CD14-positive monocyte (primary cell): ENCODE measurements at regions of chr9 and their contacts with region 1.

Region 1: DNA sequence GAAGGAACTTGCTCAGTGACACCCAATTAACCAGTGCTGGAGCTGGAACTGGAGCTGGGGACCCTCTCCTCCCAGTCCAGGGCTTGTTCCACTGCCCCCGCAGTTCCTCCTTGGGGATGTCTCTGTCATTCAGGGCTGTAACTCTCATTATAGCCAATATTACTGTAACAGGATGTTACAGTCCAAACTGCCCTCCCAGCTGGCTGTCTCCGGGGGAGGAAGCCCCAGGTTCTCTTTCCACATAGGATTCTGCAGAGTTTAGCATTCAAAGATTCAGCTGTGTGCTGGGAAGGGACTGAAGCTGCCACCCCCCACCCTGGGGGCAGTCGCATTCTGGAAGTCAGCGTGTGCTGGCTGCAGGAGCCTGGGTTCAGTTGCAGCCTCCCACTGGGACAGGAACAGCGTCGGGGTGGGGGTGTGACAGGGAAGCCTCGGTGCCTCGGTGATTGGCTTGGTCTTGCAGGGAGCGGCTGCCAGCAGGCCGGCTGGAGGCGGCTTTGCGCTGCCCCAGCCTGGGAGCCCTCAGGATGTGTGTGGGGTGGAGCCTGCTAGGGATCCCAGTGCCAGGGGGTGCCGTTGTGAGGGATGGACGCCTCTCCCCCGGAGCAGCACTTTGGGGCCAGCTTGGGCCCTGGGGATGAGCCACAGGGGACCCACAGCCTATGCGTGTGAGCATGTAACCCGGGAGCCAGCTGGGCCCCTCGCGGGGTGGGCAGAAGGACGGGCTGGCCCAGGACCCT is 101.1 kb downstream of the RGS3 start:
- DNase-seq: no peak
- H3K4me3 ChIP-seq: peak overlapping the region; percentile 15 to 70 (median 39)
- H3K4me3 Mint-ChIP-seq: peak overlapping the region; percentile 77 to 96
- H3K27ac ChIP-seq: no peak overlapping the region
- H3K27ac Mint-ChIP-seq: peak overlapping the region in 5 of 7 donors; percentile 2 to 71 (median 60)
- H3K4me1 ChIP-seq: peaks cover 20 to 24% of the 10 kb centered on the region in 2 donors
- H3K4me1 Mint-ChIP-seq: peaks cover 27% of the 10 kb centered on the region
- H3K27me3 ChIP-seq: no peaks in the 10 kb centered on the region
- H3K27me3 Mint-ChIP-seq: peaks cover 3 to 8% (median 4%) of the 10 kb centered on the region in 3 donors
- CTCF ChIP-seq: no peak

Region 2: DNA sequence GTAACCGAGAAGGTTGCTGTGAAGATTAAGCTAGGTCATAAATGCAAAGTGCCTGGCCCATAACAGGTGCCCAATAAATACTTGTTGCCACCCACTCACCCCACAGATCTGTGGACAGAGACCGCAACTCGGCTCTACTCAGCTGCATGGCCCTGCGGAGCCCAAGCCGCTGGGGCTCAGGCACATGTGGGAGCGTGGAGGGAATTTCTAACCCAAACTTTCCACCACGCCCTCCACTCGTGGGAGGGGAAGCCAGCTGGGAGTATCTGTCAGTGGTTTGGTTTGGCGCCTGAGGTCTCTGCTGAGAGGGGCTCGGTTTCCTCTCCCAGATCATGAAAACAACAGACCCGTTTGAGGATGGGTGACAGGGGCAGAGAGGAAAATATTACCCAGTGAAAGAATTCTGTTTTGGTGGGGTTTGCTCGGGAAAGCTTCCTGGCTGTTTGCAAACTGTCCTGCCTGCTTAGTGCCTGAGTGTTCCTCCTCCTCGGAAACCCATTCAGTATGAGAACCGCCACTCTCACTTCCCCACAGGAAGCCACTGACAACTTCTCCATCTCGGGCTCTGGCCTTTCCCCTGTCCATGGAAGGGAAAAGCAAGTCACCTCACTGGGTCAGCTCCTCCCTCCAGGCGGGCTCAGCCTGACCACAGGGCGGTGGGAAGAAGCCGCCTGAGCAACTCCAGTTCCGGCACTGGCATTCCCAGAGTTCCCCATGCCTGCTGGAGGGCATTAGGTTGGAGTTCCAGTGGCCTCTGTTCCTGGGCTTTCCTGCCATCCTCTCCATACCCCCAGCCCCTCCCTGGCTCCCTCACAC is 41.0 kb before region 1 on chr9:
- intact Hi-C with region 1: loop called in 1 of 2 experiments (anchors 5 kb)
- DNase-seq: peak; percentile 69 to 88 (median 78)
- H3K4me3 ChIP-seq: peak overlapping the region; percentile 8 to 74 (median 34)
- H3K4me3 Mint-ChIP-seq: peak overlapping the region; percentile 79 to 91
- H3K27ac ChIP-seq: peak overlapping the region; percentile 68 to 77
- H3K27ac Mint-ChIP-seq: peak overlapping the region; percentile 77 to 91 (median 83)
- H3K4me1 ChIP-seq: peaks cover 31 to 32% of the 10 kb centered on the region in 2 donors
- H3K4me1 Mint-ChIP-seq: peaks cover 33% of the 10 kb centered on the region
- H3K27me3 ChIP-seq: no peaks in the 10 kb centered on the region
- H3K27me3 Mint-ChIP-seq: peaks cover 0 to 2% (median 2%) of the 10 kb centered on the region in 3 donors
- CTCF ChIP-seq: no peak